ENCODE measurements at regions of chr10 and their contacts with region 1.

Region 1: DNA sequence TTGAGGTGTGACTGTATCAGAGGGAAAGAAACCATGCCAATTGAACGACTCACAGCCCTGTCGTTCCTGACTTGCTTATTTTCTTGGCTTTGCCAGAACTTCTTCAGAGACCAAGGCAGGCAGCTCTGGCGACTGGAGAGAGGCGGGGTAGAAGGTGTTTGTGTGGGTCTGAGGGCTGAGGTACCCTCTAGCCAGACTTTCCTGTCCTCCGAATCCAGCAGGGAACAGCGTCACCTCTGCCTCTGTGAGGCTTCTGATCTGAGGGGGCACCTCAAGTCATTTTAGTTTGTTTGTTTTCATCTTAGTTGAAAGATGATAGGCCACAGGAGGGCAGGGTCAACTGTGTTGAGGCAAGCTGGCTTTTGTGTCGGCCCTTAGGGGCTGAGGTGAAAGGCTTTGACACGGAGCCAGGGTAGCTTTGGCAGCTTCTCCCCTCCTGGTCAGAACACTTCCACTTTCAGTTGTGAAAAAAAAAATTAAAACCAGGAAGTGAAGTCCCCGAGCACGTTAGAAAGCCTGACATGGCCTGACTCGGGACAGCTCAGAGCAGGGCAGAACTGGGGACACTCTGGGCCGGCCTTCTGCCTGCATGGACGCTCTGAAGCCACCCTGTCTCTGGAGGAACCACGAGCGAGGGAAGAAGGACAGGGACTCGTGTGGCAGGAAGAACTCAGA is 1.9 kb downstream of the ACSL5 start:
- DNase-seq: peak; percentile 49 to 78
- ATAC-seq: peak; percentile 86 to 88 (median 88)
- H3K4me3 ChIP-seq: peak overlapping the region; percentile 90
- H3K4me3 Mint-ChIP-seq: peak overlapping the region; percentile 100
- H3K27ac ChIP-seq: peak overlapping the region; percentile 90
- H3K27ac Mint-ChIP-seq: peak overlapping the region; percentile 99 to 100
- H3K4me1 ChIP-seq: peaks cover 46% of the 10 kb centered on the region
- H3K4me1 Mint-ChIP-seq: peaks cover 63 to 69% of the 10 kb centered on the region in 2 donors
- H3K27me3 ChIP-seq: no peaks in the 10 kb centered on the region
- H3K27me3 Mint-ChIP-seq: no peaks in the 10 kb centered on the region
- CTCF ChIP-seq: no peak

Region 2: GRCh38 chr10:112446855-112447711 is 71.2 kb after region 1 on chr10 and contains the starts of genes VTI1A and ZDHHC6:
- intact Hi-C with region 1: loop called (anchors 5 kb)
- DNase-seq: peak; percentile 84 to 93
- ATAC-seq: peak; percentile 89 to 96 (median 94)
- H3K4me3 ChIP-seq: peak within 1 kb of the TSS; percentile 92
- H3K4me3 Mint-ChIP-seq: peak within 1 kb of the TSS; percentile 88
- H3K27ac ChIP-seq: peak within 1 kb of the TSS; percentile 79
- H3K27ac Mint-ChIP-seq: peak within 1 kb of the TSS; percentile 83 to 86
- H3K4me1 ChIP-seq: peaks cover 14% of the 10 kb centered on the region
- H3K4me1 Mint-ChIP-seq: peaks cover 35 to 49% of the 10 kb centered on the region in 2 donors
- H3K27me3 ChIP-seq: no peaks in the 10 kb centered on the region
- H3K27me3 Mint-ChIP-seq: no peaks in the 10 kb centered on the region
- CTCF ChIP-seq: peak; percentile 1
- total RNA-seq, gene VTI1A: 62.6 to 77.6 (median 68.2) TPM
- total RNA-seq, gene ZDHHC6: 29.1 to 36.1 (median 30.2) TPM